Heart right ventricle (tissue), 16 donors: ENCODE measurements at regions of chr10 and their contacts with region 1.

Region 1: GRCh38 chr10:69408318-69409175 is 8.2 kb downstream of the TACR2 start:
- DNase-seq: peak; percentile 96
- ATAC-seq: peak; percentile 83 to 92 (median 90)
- H3K4me3 ChIP-seq: peak overlapping the region in 9 of 10 donors; percentile 31 to 61 (median 48)
- H3K27ac ChIP-seq: peak overlapping the region; percentile 79 to 94 (median 85)
- H3K4me1 ChIP-seq: peaks cover 20 to 63% (median 57%) of the 10 kb centered on the region in 9 donors
- H3K27me3 ChIP-seq: no peaks in the 10 kb centered on the region
- CTCF ChIP-seq: peak; percentile 74 to 98 (median 89)

Region 2: GRCh38 chr10:68988530-68989316 is 419.8 kb before region 1 on chr10 and contains the start of gene KIFBP:
- intact Hi-C with region 1: loop called in 1 of 10 experiments (anchors 5 kb)
- DNase-seq: peak; percentile 84 to 96
- ATAC-seq: peak; percentile 95 to 98 (median 97)
- H3K4me3 ChIP-seq: peak within 1 kb of the TSS; percentile 76 to 98 (median 93)
- H3K27ac ChIP-seq: peak within 1 kb of the TSS; percentile 77 to 93 (median 89)
- H3K4me1 ChIP-seq: peaks cover 5 to 52% (median 48%) of the 10 kb centered on the region in 9 donors
- H3K27me3 ChIP-seq: no peaks in the 10 kb centered on the region
- CTCF ChIP-seq: peak in 8 of 9 donors; percentile 28 to 87 (median 59)
- total RNA-seq, gene KIFBP: 42.3 to 67.9 (median 53.2) TPM

Region 3: GRCh38 chr10:69237528-69238159 is 170.9 kb before region 1 on chr10:
- intact Hi-C with region 1: loop called in 1 of 10 experiments (anchors 5 kb)
- DNase-seq: peak; percentile 88 to 91
- ATAC-seq: peak; percentile 95 to 100 (median 98)
- H3K4me3 ChIP-seq: no peak overlapping the region
- H3K27ac ChIP-seq: no peak overlapping the region
- H3K4me1 ChIP-seq: peaks cover 0 to 19% (median 4%) of the 10 kb centered on the region in 9 donors
- H3K27me3 ChIP-seq: no peaks in the 10 kb centered on the region
- CTCF ChIP-seq: peak; percentile 76 to 96 (median 93)

Region 4: GRCh38 chr10:69506834-69507721 is 98.5 kb after region 1 on chr10:
- intact Hi-C with region 1: loop called in 1 of 10 experiments (anchors 5 kb)
- DNase-seq: no peak
- ATAC-seq: peak; percentile 3 to 49 (median 25)
- H3K4me3 ChIP-seq: peak overlapping the region in 5 of 10 donors; percentile 4 to 48 (median 33)
- H3K27ac ChIP-seq: peak overlapping the region in 6 of 10 donors; percentile 29 to 65 (median 50)
- H3K4me1 ChIP-seq: peaks cover 0 to 13% (median 8%) of the 10 kb centered on the region in 9 donors
- H3K27me3 ChIP-seq: no peaks in the 10 kb centered on the region
- CTCF ChIP-seq: no peak

Region 5: DNA sequence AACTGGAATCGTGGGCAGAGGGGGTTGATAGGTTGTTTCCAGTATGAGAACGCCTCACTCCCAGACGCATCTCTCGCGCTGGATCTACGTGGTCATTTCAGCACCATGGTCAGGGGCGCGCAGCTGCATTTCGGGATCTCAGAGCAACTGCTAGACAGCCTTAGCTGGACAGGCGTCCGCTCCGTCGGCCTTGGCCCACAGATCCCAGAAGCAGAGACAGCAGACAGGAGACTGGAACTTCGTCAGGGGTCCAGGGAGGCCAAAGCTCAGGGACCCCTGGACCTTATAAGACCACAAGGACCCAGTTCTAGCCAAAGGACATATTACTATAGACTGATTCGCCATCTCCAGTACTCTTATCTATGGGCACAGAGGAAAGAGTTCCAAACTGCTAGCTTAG is 159.4 kb after region 1 on chr10:
- intact Hi-C with region 1: no loop called
- DNase-seq: peak; percentile 54 to 57
- ATAC-seq: peak in 5 of 8 donors; percentile 47 to 67 (median 57)
- H3K4me3 ChIP-seq: no peak overlapping the region
- H3K27ac ChIP-seq: no peak overlapping the region
- H3K4me1 ChIP-seq: peaks cover 4 to 14% (median 10%) of the 10 kb centered on the region in 9 donors
- H3K27me3 ChIP-seq: peaks cover 13 to 94% (median 87%) of the 10 kb centered on the region in 7 donors
- CTCF ChIP-seq: no peak

Region 6: DNA sequence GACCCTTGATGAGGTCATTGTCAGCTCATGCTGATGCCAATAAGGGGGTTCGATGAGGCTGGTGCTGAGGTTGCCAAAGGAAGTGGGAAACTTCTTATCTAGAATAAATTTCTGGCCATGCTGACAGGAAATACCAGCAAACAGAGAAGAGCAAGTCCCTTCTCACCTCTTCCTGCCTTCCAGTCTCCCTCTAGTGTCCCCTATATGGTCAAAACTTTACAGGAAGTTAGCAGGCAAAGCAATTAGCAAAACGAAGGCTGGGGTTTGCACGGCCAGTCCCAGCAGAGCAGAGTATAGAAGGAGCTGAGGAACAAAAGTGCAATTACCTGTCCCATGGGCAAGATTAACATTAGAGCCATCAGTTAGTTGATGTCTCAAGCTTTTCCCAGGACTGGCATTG is 179.8 kb after region 1 on chr10:
- intact Hi-C with region 1: no loop called
- DNase-seq: no peak
- ATAC-seq: no peak
- H3K4me3 ChIP-seq: no peak overlapping the region
- H3K27ac ChIP-seq: no peak overlapping the region
- H3K4me1 ChIP-seq: no peaks in the 10 kb centered on the region
- H3K27me3 ChIP-seq: peaks cover 0 to 7% (median 0%) of the 10 kb centered on the region in 7 donors
- CTCF ChIP-seq: no peak

Region 7: GRCh38 chr10:69639291-69640195 is 231.0 kb after region 1 on chr10:
- intact Hi-C with region 1: loop called in 3 of 10 experiments (anchors 5 to 10 kb)
- DNase-seq: peak; percentile 36 to 64
- ATAC-seq: peak in 6 of 8 donors; percentile 32 to 75 (median 60)
- H3K4me3 ChIP-seq: no peak overlapping the region
- H3K27ac ChIP-seq: no peak overlapping the region
- H3K4me1 ChIP-seq: no peaks in the 10 kb centered on the region
- H3K27me3 ChIP-seq: peaks cover 0 to 37% (median 12%) of the 10 kb centered on the region in 7 donors
- CTCF ChIP-seq: peak; percentile 75 to 90 (median 87)